Naive thymus-derived CD4-positive, alpha-beta T cell (primary cell): ENCODE measurements at regions of chr6 and their contacts with region 1.

Region 1: GRCh38 chr6:89829591-89830385 is at the start of gene CASP8AP2:
- DNase-seq: peak; percentile 71 to 98 (median 96)
- ATAC-seq: peak; percentile 97
- H3K4me3 ChIP-seq: peak within 1 kb of the TSS; percentile 96
- H3K4me3 Mint-ChIP-seq: peak within 1 kb of the TSS; percentile 92 to 100 (median 99)
- H3K27ac ChIP-seq: peak within 1 kb of the TSS; percentile 83
- H3K27ac Mint-ChIP-seq: peak within 1 kb of the TSS; percentile 84 to 97 (median 95)
- H3K4me1 ChIP-seq: peaks cover 11 to 14% of the 10 kb centered on the region in 2 donors
- H3K4me1 Mint-ChIP-seq: peaks cover 11 to 47% (median 33%) of the 10 kb centered on the region in 7 donors
- H3K27me3 ChIP-seq: no peaks in the 10 kb centered on the region
- H3K27me3 Mint-ChIP-seq: no peaks in the 10 kb centered on the region
- total RNA-seq, gene CASP8AP2: 21.2 to 44.8 (median 34.5) TPM

Region 2: GRCh38 chr6:89352278-89353117 is 477.3 kb before region 1 on chr6 and contains the start of gene UBE2J1:
- CTCF ChIA-PET with region 1: no interaction called
- POLR2A ChIA-PET with region 1: no interaction called
- intact Hi-C with region 1: loop called (anchors 2 to 5 kb)
- DNase-seq: peak; percentile 34 to 87 (median 61)
- ATAC-seq: peak; percentile 89
- H3K4me3 ChIP-seq: peak within 1 kb of the TSS; percentile 67
- H3K4me3 Mint-ChIP-seq: peak within 1 kb of the TSS; percentile 96 to 100 (median 98)
- H3K27ac ChIP-seq: peak within 1 kb of the TSS; percentile 88
- H3K27ac Mint-ChIP-seq: peak within 1 kb of the TSS; percentile 95 to 98 (median 97)
- H3K4me1 ChIP-seq: peaks cover 27 to 30% of the 10 kb centered on the region in 2 donors
- H3K4me1 Mint-ChIP-seq: peaks cover 44 to 81% (median 72%) of the 10 kb centered on the region in 7 donors
- H3K27me3 ChIP-seq: no peaks in the 10 kb centered on the region
- H3K27me3 Mint-ChIP-seq: no peaks in the 10 kb centered on the region
- total RNA-seq, gene UBE2J1: 18.8 to 47.7 (median 27.7) TPM

Region 3: DNA sequence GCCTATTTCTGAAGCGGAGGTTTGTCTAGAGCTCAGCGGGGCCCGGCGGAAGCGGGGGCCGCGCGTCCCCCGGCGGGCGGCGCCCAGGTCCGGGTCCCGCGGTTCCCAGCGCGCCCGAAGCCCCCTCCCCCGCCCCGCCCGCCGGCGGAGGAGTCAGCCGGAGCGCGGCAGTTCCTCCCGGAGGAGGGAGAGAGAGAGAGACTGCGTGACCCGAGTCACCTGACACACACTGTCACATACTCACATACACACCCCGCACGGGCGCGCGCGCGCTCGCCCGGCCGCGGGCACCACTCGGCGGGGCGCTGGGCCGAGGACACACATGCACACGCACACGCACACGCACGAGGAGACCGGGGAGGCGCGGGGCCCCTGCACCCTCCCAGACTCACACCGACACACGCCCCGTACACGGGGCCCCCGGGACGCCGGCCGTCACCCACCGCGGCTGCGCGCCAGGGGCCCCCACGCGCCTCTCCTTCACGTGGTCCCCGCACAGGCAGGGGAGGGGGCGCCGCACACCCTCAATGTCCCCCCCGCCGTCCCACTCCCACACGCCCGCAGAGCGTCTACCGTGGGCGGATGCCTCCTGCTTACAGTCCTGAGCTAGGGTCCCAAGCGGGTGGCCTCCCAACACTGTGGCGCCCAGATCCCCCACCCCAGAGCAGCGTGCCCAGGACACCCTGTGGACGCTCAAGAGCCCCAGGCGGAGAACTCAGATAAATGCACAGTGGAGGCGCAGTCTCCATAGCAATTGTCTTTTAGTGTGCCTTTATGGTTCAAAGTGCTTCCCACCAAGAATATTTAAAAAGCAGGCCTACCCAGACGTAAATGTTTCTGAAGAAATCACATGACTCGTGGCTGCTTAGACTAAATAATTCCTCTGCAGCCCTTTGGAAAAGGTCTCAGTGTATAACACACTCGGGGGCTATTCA is 417.4 kb before region 1 on chr6 and contains the start of gene RRAGD:
- CTCF ChIA-PET with region 1: no interaction called
- POLR2A ChIA-PET with region 1: no interaction called
- intact Hi-C with region 1: loop called in 1 of 2 experiments (anchors 2 kb)
- DNase-seq: peak; percentile 51 to 69 (median 61)
- ATAC-seq: peak; percentile 90
- H3K4me3 ChIP-seq: peak within 1 kb of the TSS; percentile 79
- H3K4me3 Mint-ChIP-seq: peak within 1 kb of the TSS; percentile 87 to 100 (median 97)
- H3K27ac ChIP-seq: peak within 1 kb of the TSS; percentile 57
- H3K27ac Mint-ChIP-seq: peak within 1 kb of the TSS; percentile 53 to 98 (median 88)
- H3K4me1 ChIP-seq: peaks cover 8% of the 10 kb centered on the region in 2 donors
- H3K4me1 Mint-ChIP-seq: peaks cover 2 to 24% (median 19%) of the 10 kb centered on the region in 7 donors
- H3K27me3 ChIP-seq: no peaks in the 10 kb centered on the region
- H3K27me3 Mint-ChIP-seq: peaks cover 6 to 64% (median 18%) of the 10 kb centered on the region in 5 donors
- total RNA-seq, gene RRAGD: 7.3 to 12.1 (median 9.6) TPM

Region 4: DNA sequence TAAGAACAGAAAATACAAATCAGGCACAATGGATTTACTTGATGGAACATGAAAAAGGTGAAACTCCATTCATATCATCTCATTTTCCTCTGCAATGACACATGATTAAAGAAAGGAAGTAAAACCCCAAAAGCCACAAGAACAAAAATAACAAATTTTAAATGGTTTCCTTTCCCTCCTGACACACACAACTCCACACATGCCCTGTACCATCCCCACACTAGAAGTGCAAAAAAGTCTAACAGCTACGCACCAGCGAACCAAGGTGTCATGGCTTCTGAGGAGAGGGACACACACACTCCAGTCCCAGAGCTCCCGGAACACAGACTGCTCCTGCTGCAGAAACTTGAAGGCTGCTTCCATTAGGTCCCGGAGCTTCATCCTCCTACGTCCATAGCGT is 35.5 kb before region 1 on chr6:
- CTCF ChIA-PET with region 1: interaction called, 3 read pairs
- POLR2A ChIA-PET with region 1: interaction called, 6 read pairs
- intact Hi-C with region 1: loop called in 1 of 2 experiments (anchors 1 kb)
- DNase-seq: peak in 6 of 9 donors; percentile 45 to 65 (median 54)
- ATAC-seq: peak; percentile 64
- H3K4me3 ChIP-seq: no peak overlapping the region
- H3K4me3 Mint-ChIP-seq: peak overlapping the region; percentile 63 to 86 (median 72)
- H3K27ac ChIP-seq: no peak overlapping the region
- H3K27ac Mint-ChIP-seq: peak overlapping the region; percentile 28 to 80 (median 72)
- H3K4me1 ChIP-seq: peaks cover 16 to 21% of the 10 kb centered on the region in 2 donors
- H3K4me1 Mint-ChIP-seq: peaks cover 25 to 33% (median 28%) of the 10 kb centered on the region in 7 donors
- H3K27me3 ChIP-seq: no peaks in the 10 kb centered on the region
- H3K27me3 Mint-ChIP-seq: no peaks in the 10 kb centered on the region

Region 5: GRCh38 chr6:89840538-89840937 is 10.8 kb after region 1 on chr6:
- CTCF ChIA-PET with region 1: no interaction called
- POLR2A ChIA-PET with region 1: interaction called, 12 read pairs
- intact Hi-C with region 1: no loop called
- DNase-seq: peak in 1 of 9 donors; percentile 3
- ATAC-seq: no peak
- H3K4me3 ChIP-seq: no peak overlapping the region
- H3K4me3 Mint-ChIP-seq: peak overlapping the region in 1 of 10 donors; percentile 38
- H3K27ac ChIP-seq: no peak overlapping the region
- H3K27ac Mint-ChIP-seq: peak overlapping the region in 2 of 9 donors; percentile 41 to 72
- H3K4me1 ChIP-seq: peaks cover 5 to 12% of the 10 kb centered on the region in 2 donors
- H3K4me1 Mint-ChIP-seq: peaks cover 34 to 67% (median 46%) of the 10 kb centered on the region in 7 donors
- H3K27me3 ChIP-seq: no peaks in the 10 kb centered on the region
- H3K27me3 Mint-ChIP-seq: no peaks in the 10 kb centered on the region

Region 6: GRCh38 chr6:89853068-89853467 is 23.3 kb after region 1 on chr6:
- CTCF ChIA-PET with region 1: no interaction called
- POLR2A ChIA-PET with region 1: no interaction called
- intact Hi-C with region 1: no loop called
- DNase-seq: no peak
- ATAC-seq: no peak
- H3K4me3 ChIP-seq: no peak overlapping the region
- H3K4me3 Mint-ChIP-seq: no peak overlapping the region
- H3K27ac ChIP-seq: no peak overlapping the region
- H3K27ac Mint-ChIP-seq: peak overlapping the region in 1 of 9 donors; percentile 45
- H3K4me1 ChIP-seq: no peaks in the 10 kb centered on the region
- H3K4me1 Mint-ChIP-seq: peaks cover 0 to 15% (median 5%) of the 10 kb centered on the region in 7 donors
- H3K27me3 ChIP-seq: no peaks in the 10 kb centered on the region
- H3K27me3 Mint-ChIP-seq: no peaks in the 10 kb centered on the region

Region 7: DNA sequence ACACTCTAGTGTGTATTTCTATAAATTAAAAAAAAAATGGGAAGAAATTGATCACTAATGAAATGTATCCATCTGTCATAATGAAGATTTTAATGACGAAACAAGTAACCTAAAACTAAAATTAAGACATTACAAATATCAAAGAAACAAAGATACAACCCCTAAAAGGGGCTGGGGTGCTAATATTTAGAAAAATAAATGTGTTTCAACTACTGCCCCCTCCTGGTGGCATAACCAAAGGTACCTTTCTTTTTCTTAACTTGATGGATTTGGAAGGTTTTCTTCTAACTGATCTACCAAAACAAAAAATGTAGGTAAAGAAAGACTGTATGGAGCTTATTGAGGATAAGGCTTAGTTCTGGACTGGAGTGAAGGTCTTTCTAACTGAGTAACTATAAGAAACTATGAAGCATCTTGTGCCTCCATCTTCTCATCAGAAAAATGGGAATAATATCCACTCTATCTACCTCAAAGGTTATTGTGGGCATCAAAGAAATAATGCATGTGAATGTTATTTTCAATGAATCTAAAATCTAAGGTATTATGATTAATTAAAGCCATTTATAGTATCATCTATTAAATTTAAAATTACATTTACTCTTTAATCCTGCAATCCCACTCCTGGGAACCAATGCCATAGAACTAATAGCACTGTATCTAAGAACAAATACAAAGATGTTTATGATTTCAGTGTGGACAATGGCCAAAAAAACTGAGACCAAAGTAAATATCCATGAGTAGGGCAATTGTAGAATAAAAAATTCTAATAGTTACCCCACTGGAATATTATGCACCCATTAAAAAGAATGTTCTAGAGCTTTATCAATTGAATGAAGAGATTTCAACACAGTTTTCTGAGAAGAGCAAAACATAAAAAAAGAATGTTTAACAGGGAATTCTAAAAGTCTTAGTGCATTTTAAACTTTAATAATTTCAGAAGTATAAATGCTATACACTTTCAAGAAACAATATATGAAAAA is 349.7 kb after region 1 on chr6:
- CTCF ChIA-PET with region 1: no interaction called
- POLR2A ChIA-PET with region 1: no interaction called
- intact Hi-C with region 1: loop called in 1 of 2 experiments (anchors 5 kb)
- DNase-seq: peak in 3 of 9 donors; percentile 39 to 53 (median 43)
- ATAC-seq: no peak
- H3K4me3 ChIP-seq: no peak overlapping the region
- H3K4me3 Mint-ChIP-seq: peak overlapping the region in 5 of 10 donors; percentile 8 to 83 (median 72)
- H3K27ac ChIP-seq: peak overlapping the region; percentile 64
- H3K27ac Mint-ChIP-seq: peak overlapping the region in 8 of 9 donors; percentile 58 to 97 (median 88)
- H3K4me1 ChIP-seq: peaks cover 0 to 69% of the 10 kb centered on the region in 2 donors
- H3K4me1 Mint-ChIP-seq: peaks cover 49 to 92% (median 86%) of the 10 kb centered on the region in 7 donors
- H3K27me3 ChIP-seq: no peaks in the 10 kb centered on the region
- H3K27me3 Mint-ChIP-seq: no peaks in the 10 kb centered on the region

Region 8: GRCh38 chr6:90586836-90587638 is 757.2 kb after region 1 on chr6 and contains the start of gene MAP3K7:
- CTCF ChIA-PET with region 1: no interaction called
- POLR2A ChIA-PET with region 1: no interaction called
- intact Hi-C with region 1: loop called (anchors 1 kb)
- DNase-seq: peak; percentile 83 to 96 (median 93)
- ATAC-seq: peak; percentile 90
- H3K4me3 ChIP-seq: peak within 1 kb of the TSS; percentile 88
- H3K4me3 Mint-ChIP-seq: peak within 1 kb of the TSS; percentile 92 to 99 (median 96)
- H3K27ac ChIP-seq: peak within 1 kb of the TSS; percentile 93
- H3K27ac Mint-ChIP-seq: peak within 1 kb of the TSS; percentile 93 to 100 (median 99)
- H3K4me1 ChIP-seq: peaks cover 17 to 22% of the 10 kb centered on the region in 2 donors
- H3K4me1 Mint-ChIP-seq: peaks cover 24 to 49% (median 45%) of the 10 kb centered on the region in 7 donors
- H3K27me3 ChIP-seq: no peaks in the 10 kb centered on the region
- H3K27me3 Mint-ChIP-seq: peaks cover 5 to 36% (median 11%) of the 10 kb centered on the region in 5 donors
- total RNA-seq, gene MAP3K7: 16.1 to 38.5 (median 29.9) TPM